ENCODE measurements at regions of chr20 and their contacts with region 1.

Region 1: DNA sequence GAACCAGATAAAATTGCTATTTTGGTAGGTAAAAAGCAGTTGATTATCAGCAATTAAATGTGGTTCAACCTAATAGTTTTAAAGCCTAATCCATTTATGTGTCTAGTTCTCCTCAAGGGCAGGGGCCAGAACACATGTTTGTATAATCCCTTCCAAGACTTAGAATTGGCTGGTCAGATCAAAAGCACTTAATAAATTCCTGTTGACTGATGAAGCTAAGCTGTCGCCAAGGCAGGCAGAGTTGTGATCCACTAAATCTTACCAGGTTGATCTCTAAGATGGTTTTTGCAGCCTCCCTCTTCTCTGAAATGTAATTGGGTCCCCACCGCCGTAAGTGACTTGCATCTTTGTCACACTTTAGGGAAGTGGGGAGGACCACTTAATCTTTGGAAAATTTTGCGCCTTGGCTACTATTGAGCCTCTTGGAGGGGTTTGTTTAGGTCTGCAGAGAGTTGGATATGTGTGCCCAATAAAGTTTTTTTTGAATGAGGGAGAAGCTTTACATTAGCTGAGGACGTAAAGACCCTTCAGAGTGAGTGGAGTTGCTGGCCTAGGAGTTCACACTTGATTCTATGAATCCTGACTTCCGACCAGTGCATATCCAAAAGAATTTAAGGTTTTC is 65.9 kb downstream of the PHF20 start:
- DNase-seq: no peak
- ATAC-seq: no peak
- H3K4me3 ChIP-seq: no peak overlapping the region
- H3K27ac ChIP-seq: no peak overlapping the region
- H3K4me1 ChIP-seq: no peaks in the 10 kb centered on the region
- H3K27me3 ChIP-seq: no peaks in the 10 kb centered on the region
- CTCF ChIP-seq: no peak

Region 2: DNA sequence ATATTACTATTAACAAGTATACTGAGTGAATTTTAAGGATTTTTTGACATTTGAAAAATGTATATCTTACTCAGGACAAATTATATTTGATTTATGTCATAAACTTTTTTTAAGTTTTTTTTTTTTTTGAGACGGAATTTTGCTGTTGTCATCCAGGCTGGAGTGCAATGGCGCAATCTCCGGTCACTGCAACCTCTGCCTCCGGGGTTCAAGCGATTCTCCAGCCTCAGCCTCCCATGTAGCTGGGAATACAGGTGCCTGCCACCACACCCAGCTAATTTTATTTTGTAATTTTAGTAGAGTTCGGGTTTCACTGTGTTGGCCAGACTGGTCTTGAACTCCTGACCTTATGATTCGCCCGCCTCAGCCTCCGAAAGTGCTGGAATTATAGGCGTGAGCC is 21.3 kb before region 1 on chr20:
- CTCF ChIA-PET with region 1: interaction called, 10 read pairs
- POLR2A ChIA-PET with region 1: no interaction called
- intact Hi-C with region 1: no loop called
- DNase-seq: no peak
- ATAC-seq: no peak
- H3K4me3 ChIP-seq: no peak overlapping the region
- H3K27ac ChIP-seq: no peak overlapping the region
- H3K4me1 ChIP-seq: peaks cover 26% of the 10 kb centered on the region
- H3K27me3 ChIP-seq: no peaks in the 10 kb centered on the region
- CTCF ChIP-seq: no peak